ENCODE measurements at regions of chr11 and their contacts with region 1.

Region 1: DNA sequence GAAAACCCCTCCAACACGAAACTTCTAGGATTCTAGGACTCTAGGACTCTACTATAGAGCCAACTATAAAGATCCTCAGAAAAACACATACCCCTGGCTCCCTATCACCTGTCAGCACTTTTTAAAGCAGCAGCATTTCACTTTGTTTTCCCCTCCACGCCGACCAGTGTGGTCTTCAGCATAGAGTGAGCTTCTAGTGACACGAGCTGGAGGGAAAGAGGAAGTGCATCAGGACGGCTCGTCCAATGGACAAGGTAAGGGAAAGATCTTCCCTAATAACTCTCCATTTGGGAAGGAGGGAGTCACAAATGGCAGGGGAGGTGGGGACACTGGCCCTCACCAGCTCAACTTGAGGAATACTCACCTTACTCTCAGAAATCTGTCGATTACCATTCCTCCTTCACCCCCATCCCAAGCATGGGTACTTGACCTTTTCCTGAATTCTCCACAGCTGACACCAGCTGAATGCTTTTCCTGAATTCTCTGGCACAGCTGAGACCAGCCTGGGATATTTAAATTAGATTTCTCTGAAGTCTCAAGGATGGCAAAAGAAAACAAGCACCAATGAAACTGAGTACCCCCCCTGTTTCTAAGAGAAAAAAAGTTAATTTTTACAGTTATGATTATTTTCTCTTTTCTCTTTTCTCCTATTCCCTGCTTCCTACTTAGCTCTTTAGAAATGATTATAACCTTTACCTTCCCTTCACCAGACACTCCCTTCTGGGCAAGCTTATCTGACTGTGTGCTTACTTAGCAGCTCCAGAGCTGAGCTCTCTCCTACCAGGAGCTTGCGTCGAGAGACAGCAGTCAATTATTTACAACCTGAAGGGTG is 33.3 kb upstream of the NNMT start:
- DNase-seq: peak in 1 of 2 donors; percentile 68
- H3K4me3 ChIP-seq: no peak overlapping the region
- H3K27ac ChIP-seq: peak overlapping the region in 1 of 2 donors; percentile 32
- H3K4me1 ChIP-seq: peaks cover 14 to 28% of the 10 kb centered on the region in 2 donors
- H3K27me3 ChIP-seq: no peaks in the 10 kb centered on the region
- CTCF ChIP-seq: peak; percentile 35 to 61 (median 49)

Region 2: GRCh38 chr11:113896156-113896879 is 366.6 kb before region 1 on chr11:
- intact Hi-C with region 1: loop called (anchors 2 kb)
- DNase-seq: peak in 1 of 2 donors; percentile 62
- H3K4me3 ChIP-seq: no peak overlapping the region
- H3K27ac ChIP-seq: no peak overlapping the region
- H3K4me1 ChIP-seq: peaks cover 0 to 6% of the 10 kb centered on the region in 2 donors
- H3K27me3 ChIP-seq: no peaks in the 10 kb centered on the region
- CTCF ChIP-seq: peak; percentile 41 to 83 (median 73)

Region 3: DNA sequence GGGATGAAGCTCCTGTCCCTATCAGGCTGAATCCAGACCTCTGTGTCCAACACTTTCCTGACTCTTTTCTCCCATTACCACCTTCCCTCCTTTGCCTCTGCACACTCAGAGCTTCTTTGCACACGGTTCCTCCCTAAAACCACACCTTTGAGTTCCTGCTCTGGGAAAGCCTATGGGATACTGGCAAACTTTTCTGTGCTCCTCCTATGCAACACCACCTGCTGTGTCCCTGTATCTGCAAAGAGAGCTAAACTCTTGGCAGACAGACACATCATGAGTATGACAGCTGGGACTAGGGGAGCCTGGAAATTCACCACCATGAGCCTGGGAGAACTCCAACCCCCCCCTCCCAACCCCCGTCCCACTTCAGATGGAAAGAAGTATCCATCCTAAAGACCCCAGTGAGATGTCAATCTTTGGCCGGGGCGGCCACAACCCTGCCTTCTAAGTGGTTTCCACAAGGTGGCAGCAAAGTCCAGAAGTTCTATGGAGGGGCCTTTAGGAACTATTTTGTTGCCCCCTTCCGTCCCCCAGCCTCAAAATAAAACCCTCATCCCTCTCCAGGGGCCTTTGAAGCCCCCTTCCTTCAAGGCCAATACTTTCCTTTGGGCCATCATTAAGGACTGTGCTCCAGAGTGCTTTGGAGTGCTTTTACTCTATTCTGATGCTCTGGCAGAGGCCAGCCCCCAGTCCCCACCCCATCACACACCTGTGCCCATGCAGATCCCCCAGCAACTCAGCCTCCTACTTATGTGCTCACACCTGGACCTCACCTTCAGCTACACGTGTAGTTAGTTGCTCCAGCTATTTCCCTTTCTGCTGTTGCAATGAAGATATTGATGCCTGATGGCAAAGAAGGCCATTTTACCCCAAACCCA is 268.6 kb before region 1 on chr11:
- intact Hi-C with region 1: loop called (anchors 1 kb)
- DNase-seq: no peak
- H3K4me3 ChIP-seq: no peak overlapping the region
- H3K27ac ChIP-seq: no peak overlapping the region
- H3K4me1 ChIP-seq: no peaks in the 10 kb centered on the region
- H3K27me3 ChIP-seq: no peaks in the 10 kb centered on the region
- CTCF ChIP-seq: peak; percentile 64 to 83 (median 70)

Region 4: GRCh38 chr11:114036156-114036811 is 226.6 kb before region 1 on chr11:
- intact Hi-C with region 1: loop called (anchors 1 kb)
- DNase-seq: peak; percentile 27 to 88
- H3K4me3 ChIP-seq: peak overlapping the region; percentile 57 to 59
- H3K27ac ChIP-seq: peak overlapping the region; percentile 77 to 87
- H3K4me1 ChIP-seq: peaks cover 0 to 26% of the 10 kb centered on the region in 2 donors
- H3K27me3 ChIP-seq: no peaks in the 10 kb centered on the region
- CTCF ChIP-seq: peak; percentile 88 to 91 (median 90)

Region 5: DNA sequence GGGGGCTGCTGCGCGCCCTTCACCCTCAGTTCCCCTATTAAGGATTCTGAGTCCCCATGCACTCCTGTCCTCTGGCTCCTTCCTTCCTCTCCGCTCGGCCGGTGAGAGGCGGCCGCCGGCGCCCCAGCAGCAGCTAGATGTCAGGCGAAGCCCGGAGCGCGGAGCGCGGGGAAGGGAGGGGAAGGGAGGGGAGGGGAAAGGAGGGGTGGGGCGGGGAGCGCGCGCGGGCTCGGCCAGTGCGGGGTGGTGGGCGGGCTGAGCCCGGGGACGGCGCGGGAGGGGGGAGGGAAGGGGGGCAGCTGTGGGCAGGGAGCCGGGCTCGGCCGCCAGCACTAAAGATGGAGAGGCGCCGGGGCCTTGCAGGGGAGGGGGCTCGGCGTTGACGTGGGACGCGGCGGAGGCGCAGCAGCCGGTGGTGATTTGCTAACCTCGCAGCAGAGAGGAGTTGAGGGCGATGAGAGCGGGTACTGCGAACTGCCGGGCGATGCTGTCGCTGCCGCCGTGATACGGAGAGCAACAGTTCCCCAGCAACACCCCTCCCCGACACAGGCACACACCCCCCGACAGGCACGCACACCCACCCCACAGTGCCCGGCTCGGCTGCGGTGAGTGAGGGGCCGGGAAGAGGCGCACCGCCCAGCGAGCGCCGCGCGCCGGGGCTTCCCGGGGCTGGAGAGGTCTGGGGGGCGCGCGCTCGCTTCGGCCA is 203.5 kb before region 1 on chr11 and contains the start of gene ZBTB16:
- intact Hi-C with region 1: loop called (anchors 2 kb)
- DNase-seq: peak; percentile 54 to 94
- H3K4me3 ChIP-seq: peak within 1 kb of the TSS; percentile 87 to 99
- H3K27ac ChIP-seq: peak within 1 kb of the TSS; percentile 97 to 98
- H3K4me1 ChIP-seq: peaks cover 4 to 17% of the 10 kb centered on the region in 2 donors
- H3K27me3 ChIP-seq: no peaks in the 10 kb centered on the region
- CTCF ChIP-seq: peak; percentile 6 to 75 (median 40)
- total RNA-seq, gene ZBTB16: 344 TPM

Region 6: DNA sequence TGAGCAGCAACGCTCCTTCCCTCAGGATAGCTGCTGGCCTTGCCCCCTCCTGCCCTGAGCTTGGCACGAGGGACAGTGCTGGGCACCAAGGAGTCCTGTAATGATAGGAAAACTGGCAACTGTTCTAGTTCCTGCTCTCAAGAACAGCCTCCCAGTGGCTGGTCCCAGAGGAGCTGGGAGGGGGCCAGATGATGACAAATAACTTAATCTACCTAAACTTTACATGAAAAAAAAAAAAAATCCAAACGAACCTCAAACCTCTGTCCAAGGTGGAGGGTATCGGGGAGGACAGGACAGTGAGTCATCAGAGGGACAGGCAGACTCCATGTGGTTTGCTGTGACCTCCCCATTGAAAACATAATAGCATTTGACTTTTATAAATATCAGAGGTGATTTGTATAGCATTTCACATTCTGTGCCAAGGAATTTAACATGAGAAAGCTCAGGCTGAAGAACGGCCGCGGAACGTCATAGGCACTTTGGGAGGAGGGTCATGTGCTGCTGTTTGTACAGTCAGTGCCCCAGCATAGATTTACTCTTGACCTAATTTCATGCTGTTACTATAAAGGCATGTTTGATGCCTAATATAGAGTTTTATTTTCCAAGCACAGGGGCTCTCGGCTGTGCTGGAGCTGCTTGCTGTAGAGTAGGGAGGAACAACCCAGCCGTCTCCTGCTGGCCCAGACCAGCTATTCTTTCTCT is 64.9 kb before region 1 on chr11:
- intact Hi-C with region 1: loop called (anchors 5 kb)
- DNase-seq: peak; percentile 50 to 93
- H3K4me3 ChIP-seq: peak overlapping the region in 1 of 2 donors; percentile 31
- H3K27ac ChIP-seq: peak overlapping the region; percentile 88 to 98
- H3K4me1 ChIP-seq: peaks cover 45 to 83% of the 10 kb centered on the region in 2 donors
- H3K27me3 ChIP-seq: no peaks in the 10 kb centered on the region
- CTCF ChIP-seq: no peak

Region 7: GRCh38 chr11:114250993-114251814 is 11.7 kb before region 1 on chr11:
- intact Hi-C with region 1: no loop called
- DNase-seq: peak in 1 of 2 donors; percentile 85
- H3K4me3 ChIP-seq: no peak overlapping the region
- H3K27ac ChIP-seq: peak overlapping the region; percentile 72 to 78
- H3K4me1 ChIP-seq: peaks cover 7 to 28% of the 10 kb centered on the region in 2 donors
- H3K27me3 ChIP-seq: no peaks in the 10 kb centered on the region
- CTCF ChIP-seq: peak in 1 of 3 experiments; percentile 7

Region 8: DNA sequence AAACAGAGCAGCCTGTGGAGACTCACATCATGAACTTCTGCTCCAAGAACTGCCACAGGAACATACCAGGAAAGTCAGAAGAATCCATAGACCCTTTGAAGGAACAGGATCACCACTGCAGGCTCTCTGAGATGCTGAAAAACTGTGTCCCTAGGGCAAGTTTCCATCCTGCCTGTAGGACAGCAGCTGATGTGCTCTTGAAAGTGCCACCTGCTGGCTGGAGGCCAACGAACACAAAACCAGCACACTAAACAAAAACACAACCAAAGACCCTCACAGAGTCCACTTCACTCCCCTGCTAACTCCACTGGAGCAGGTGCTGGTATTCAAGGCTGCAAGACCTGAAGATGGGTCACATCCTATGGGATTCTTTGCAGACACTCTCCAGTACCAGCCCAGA is 308.8 kb after region 1 on chr11:
- intact Hi-C with region 1: no loop called
- DNase-seq: no peak
- H3K4me3 ChIP-seq: no peak overlapping the region
- H3K27ac ChIP-seq: no peak overlapping the region
- H3K4me1 ChIP-seq: no peaks in the 10 kb centered on the region
- H3K27me3 ChIP-seq: no peaks in the 10 kb centered on the region
- CTCF ChIP-seq: no peak